Activated CD4-positive, alpha-beta memory T cell treated with anti-CD3 and anti-CD28 coated beads for 36 hours (primary cell): ENCODE measurements at regions of chr17 and their contacts with region 1.

Region 1: DNA sequence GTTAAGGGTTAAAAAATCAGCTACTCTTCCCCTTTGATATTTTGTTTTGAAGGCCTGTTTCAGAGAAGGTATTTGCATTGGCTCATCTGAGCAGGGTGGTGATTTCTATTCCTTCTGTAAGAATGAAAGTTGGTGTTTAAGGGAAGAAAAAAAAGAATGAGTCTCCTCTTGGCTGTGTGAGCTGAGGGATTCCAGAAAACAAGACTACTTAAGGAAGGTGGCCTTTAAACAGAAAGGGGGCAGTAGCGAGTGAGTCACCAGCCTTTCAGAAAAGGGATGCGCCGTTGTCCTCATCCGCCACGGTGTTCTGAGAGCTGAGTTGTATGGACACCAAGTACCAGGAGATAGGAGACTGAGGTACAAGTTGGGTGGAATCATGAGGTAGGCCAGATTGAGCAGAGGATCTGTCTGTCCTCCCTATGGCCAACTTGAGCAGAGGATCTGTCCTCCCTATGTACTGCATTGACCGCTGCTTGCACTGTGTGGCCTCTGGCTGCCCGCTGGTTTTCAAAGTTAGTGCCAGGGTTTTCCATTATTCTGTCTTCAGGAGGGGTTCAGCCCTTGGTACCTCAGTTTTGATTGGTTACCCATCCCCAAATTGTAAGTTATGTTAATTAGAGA is 8.2 kb downstream of the PRKCA start:
- DNase-seq: peak; percentile 72
- H3K4me3 Mint-ChIP-seq: peak overlapping the region; percentile 13
- H3K27ac Mint-ChIP-seq: peak overlapping the region; percentile 88
- H3K4me1 Mint-ChIP-seq: peaks cover 93% of the 10 kb centered on the region
- H3K27me3 Mint-ChIP-seq: no peaks in the 10 kb centered on the region

Region 2: DNA sequence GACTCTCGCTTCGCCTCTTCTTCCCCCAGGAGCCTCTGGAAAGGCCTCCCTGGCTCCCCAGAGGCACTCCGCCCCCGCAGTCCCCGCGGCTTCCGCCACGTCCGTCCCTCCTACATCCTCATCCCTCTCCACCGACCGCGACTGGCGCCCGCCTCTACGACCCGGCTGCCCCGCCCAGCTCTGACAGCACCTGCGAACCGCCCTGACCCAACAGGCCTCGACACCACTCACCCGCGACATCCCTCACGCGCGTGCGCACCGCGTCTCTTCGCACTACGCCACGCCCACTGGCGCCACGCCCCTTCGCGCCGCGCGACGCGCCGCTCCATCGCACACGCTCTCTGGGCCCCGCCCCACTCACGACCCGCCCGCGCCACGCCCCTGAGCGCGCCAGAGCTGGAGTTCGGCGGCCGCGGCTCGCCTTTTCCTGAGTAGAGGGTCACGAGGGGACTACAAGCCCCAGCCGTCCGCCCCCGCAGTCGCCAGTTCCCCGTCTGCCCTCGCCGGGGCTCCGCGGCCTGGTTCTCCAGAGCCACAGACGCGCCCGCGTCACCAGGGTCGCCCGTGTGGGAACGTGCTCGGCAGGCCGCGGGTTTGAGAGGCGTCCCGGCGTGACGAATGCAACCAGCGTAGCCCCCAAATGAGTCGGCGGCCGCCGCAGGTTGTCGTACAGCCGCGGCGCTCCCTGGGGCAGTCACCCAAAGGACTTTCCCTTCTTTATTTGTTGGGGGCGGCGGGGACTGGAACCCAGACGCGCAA is 1335.1 kb before region 1 on chr17:
- CTCF ChIA-PET with region 1: no interaction called
- POLR2A ChIA-PET with region 1: no interaction called
- intact Hi-C with region 1: loop called (anchors 5 kb)
- DNase-seq: peak; percentile 97
- H3K4me3 Mint-ChIP-seq: peak overlapping the region; percentile 82
- H3K27ac Mint-ChIP-seq: peak overlapping the region; percentile 100
- H3K4me1 Mint-ChIP-seq: peaks cover 55% of the 10 kb centered on the region
- H3K27me3 Mint-ChIP-seq: no peaks in the 10 kb centered on the region

Region 3: DNA sequence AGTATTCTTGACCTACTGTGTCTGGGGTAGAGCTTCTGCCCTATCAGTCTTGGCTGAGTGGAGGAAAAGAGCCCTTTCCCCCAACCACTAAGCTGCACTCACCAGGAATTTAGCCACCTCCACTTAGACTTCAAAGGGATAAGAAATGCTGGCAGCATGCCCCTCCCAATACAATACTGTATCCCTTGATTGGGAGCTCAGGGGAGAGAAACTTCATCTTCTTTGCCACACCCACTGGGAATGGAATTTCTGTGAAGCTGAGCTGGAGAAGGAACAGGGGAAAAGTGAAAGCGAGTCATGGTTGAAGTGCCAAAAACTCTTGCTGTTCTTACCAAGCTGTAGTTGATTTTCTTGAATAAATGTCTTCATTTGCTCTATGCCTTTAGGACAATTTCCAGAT is 187.5 kb before region 1 on chr17:
- CTCF ChIA-PET with region 1: no interaction called
- POLR2A ChIA-PET with region 1: no interaction called
- intact Hi-C with region 1: no loop called
- DNase-seq: no peak
- H3K4me3 Mint-ChIP-seq: no peak overlapping the region
- H3K27ac Mint-ChIP-seq: no peak overlapping the region
- H3K4me1 Mint-ChIP-seq: no peaks in the 10 kb centered on the region
- H3K27me3 Mint-ChIP-seq: peaks cover 4% of the 10 kb centered on the region

Region 4: GRCh38 chr17:66191593-66192382 is 118.8 kb before region 1 on chr17 and contains the start of gene CEP112:
- CTCF ChIA-PET with region 1: no interaction called
- POLR2A ChIA-PET with region 1: no interaction called
- intact Hi-C with region 1: no loop called
- DNase-seq: peak; percentile 87
- H3K4me3 Mint-ChIP-seq: peak within 1 kb of the TSS; percentile 81
- H3K27ac Mint-ChIP-seq: peak within 1 kb of the TSS; percentile 46
- H3K4me1 Mint-ChIP-seq: peaks cover 13% of the 10 kb centered on the region
- H3K27me3 Mint-ChIP-seq: no peaks in the 10 kb centered on the region
- total RNA-seq, gene CEP112: 3.3 to 3.7 TPM

Region 5: DNA sequence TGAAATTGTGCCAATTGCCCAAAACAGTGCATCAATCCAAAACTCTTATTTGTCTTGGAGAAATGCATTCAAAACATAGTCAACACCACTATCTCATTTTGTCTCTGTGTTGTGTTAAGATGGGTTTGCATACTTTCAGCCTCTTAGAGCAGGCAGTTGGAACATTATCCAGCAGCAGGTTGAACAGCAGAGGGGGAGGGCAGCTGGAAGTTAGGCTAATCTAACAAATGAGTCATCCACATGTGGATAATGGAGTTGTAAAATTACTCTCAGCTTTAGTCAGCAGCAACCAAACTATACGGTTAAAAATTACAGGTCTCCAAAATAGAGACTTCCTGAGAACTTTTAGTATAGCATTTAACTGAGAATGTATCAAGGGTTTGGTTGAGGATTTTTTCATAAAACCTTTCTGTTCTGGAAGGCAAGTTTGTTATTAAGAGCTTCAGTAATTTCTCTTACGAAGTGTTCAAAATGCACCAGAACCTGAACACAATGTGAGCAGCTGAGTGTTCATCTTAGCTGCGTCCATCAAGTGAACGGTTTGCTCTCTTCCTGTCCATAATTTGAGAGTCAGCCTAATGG is 38.0 kb after region 1 on chr17:
- CTCF ChIA-PET with region 1: interaction called, 4 read pairs
- POLR2A ChIA-PET with region 1: no interaction called
- intact Hi-C with region 1: loop called (anchors 5 kb)
- DNase-seq: peak; percentile 58
- H3K4me3 Mint-ChIP-seq: no peak overlapping the region
- H3K27ac Mint-ChIP-seq: peak overlapping the region; percentile 47
- H3K4me1 Mint-ChIP-seq: peaks cover 78% of the 10 kb centered on the region
- H3K27me3 Mint-ChIP-seq: no peaks in the 10 kb centered on the region

Region 6: GRCh38 chr17:66514227-66514806 is 203.7 kb after region 1 on chr17:
- CTCF ChIA-PET with region 1: no interaction called
- POLR2A ChIA-PET with region 1: no interaction called
- intact Hi-C with region 1: loop called (anchors 2 kb)
- DNase-seq: peak; percentile 60
- H3K4me3 Mint-ChIP-seq: no peak overlapping the region
- H3K27ac Mint-ChIP-seq: peak overlapping the region; percentile 51
- H3K4me1 Mint-ChIP-seq: peaks cover 86% of the 10 kb centered on the region
- H3K27me3 Mint-ChIP-seq: no peaks in the 10 kb centered on the region

Region 7: DNA sequence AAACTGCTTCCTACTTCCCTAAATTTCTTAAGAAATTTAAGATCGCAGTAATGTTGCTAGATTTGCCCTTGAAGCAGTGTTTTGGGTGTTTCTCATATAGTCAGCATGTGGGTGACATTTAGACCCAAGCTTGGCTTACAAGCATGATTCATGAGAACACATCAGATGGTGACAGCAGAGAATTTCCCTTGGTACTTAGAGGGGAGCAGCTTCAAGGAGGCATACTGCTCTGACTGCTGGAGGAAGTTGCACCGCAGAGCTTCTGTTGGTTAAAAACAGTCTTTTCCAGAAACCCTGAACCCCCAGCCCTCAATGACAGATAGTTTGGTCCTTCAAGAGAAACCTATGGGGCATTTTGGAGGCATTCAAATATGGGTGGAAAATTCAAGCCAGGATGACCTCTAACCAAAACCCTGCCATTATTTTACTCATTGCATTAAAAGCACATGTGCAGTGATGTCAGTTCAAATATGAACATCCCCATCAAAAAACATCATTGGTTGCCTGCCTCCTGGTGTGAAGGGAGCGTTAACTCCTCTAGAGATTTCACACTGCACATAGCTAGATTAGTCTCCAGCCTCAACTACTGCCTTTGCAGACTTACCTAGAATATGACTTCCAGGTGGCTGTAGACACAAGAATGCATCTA is 322.8 kb after region 1 on chr17:
- CTCF ChIA-PET with region 1: no interaction called
- POLR2A ChIA-PET with region 1: no interaction called
- intact Hi-C with region 1: loop called (anchors 5 kb)
- DNase-seq: peak; percentile 70
- H3K4me3 Mint-ChIP-seq: no peak overlapping the region
- H3K27ac Mint-ChIP-seq: peak overlapping the region; percentile 61
- H3K4me1 Mint-ChIP-seq: peaks cover 55% of the 10 kb centered on the region
- H3K27me3 Mint-ChIP-seq: no peaks in the 10 kb centered on the region